Activated naive CD4-positive, alpha-beta T cell treated with anti-CD3 and anti-CD28 coated beads for 36 hours (primary cell): ENCODE measurements at regions of chr10 and their contacts with region 1.

Region 1: DNA sequence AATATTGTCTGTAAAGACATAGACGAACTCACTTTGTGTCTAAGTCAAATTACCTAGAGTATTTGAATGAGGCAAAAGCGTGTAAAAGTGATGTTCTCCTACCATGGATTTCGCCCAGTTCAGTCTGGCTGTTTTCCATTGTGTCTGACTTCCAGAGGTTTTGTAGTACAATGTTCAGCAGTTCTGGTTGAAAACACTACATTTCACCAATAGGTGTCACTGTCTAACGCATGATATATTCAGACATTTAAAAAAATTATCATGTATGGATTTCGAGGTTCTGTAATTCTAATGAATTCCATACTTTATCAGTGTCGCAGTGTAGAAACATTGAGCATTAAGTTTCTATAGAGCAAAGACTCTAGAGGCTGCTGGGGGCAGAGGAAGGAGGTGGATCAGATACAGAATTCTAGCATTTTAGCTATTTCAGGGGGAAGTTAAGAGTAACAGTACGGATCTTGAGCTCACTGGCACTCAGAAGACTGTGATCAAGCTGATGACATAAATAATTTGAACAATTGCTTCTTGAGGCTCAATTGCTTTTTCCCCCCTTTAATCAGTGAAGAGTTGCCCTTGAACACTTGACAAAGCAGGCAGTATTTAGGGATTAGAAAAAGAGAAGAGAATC is 196.9 kb upstream of the RHOBTB1 start:
- DNase-seq: no peak
- H3K4me3 Mint-ChIP-seq: no peak overlapping the region
- H3K27ac Mint-ChIP-seq: no peak overlapping the region
- H3K4me1 Mint-ChIP-seq: no peaks in the 10 kb centered on the region
- H3K27me3 Mint-ChIP-seq: peaks cover 3% of the 10 kb centered on the region

Region 2: GRCh38 chr10:60534761-60535389 is 606.0 kb before region 1 on chr10:
- CTCF ChIA-PET with region 1: no interaction called
- intact Hi-C with region 1: no loop called
- DNase-seq: no peak
- H3K4me3 Mint-ChIP-seq: no peak overlapping the region
- H3K27ac Mint-ChIP-seq: no peak overlapping the region
- H3K4me1 Mint-ChIP-seq: peaks cover 31% of the 10 kb centered on the region
- H3K27me3 Mint-ChIP-seq: no peaks in the 10 kb centered on the region

Region 3: DNA sequence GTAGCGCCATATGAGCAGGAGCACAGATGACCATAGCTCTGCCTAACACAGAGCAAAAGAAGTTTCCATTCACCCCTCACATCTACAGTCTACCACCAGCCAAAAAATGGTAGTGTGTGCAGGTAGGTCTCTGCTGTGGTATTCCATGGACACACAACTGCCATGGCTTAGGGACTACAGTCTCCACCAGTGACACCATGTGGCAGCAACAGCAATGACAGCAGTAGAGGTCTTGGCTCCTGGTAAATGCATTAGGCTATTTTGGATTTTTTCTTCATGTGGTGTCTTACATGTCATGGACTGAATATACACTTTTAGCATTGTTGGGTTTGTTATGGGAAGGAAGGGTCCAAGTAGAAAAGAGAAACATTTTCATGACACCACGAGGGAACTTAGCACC is 451.7 kb after region 1 on chr10:
- CTCF ChIA-PET with region 1: no interaction called
- intact Hi-C with region 1: loop called (anchors 5 kb)
- DNase-seq: no peak
- H3K4me3 Mint-ChIP-seq: no peak overlapping the region
- H3K27ac Mint-ChIP-seq: no peak overlapping the region
- H3K4me1 Mint-ChIP-seq: no peaks in the 10 kb centered on the region
- H3K27me3 Mint-ChIP-seq: peaks cover 6% of the 10 kb centered on the region

Region 4: DNA sequence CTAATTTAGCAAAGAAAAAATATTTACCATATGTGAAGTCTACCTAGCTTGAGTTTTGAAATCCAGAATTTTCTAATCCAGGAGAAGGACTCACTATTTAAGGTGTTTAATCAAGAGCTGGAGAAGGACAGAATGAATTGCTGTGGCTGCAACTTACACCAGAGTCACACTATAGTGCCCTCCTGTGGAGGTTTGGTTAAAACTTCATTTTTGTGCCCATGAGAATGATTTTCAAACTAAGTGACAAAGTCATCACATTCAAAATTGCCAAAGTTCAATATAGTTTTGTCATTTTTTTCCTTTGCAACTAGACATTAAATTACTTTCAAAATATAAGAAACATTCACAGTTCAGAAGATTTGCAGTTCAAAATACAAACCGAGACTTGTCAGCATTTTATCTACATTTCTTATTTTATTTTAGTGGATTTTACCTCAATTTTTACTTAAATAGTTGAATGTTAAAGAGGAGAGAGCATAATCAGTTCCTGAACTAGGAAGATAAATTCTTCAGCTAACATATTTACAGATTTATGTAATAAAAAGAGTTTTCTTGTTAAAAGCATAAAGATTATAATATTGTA is 592.6 kb after region 1 on chr10:
- CTCF ChIA-PET with region 1: interaction called, 6 read pairs
- intact Hi-C with region 1: loop called (anchors 1 kb)
- DNase-seq: peak; percentile 37
- H3K4me3 Mint-ChIP-seq: no peak overlapping the region
- H3K27ac Mint-ChIP-seq: no peak overlapping the region
- H3K4me1 Mint-ChIP-seq: no peaks in the 10 kb centered on the region
- H3K27me3 Mint-ChIP-seq: peaks cover 30% of the 10 kb centered on the region

Region 5: GRCh38 chr10:61869774-61870525 is 729.1 kb after region 1 on chr10:
- CTCF ChIA-PET with region 1: no interaction called
- intact Hi-C with region 1: loop called (anchors 1 kb)
- DNase-seq: no peak
- H3K4me3 Mint-ChIP-seq: no peak overlapping the region
- H3K27ac Mint-ChIP-seq: no peak overlapping the region
- H3K4me1 Mint-ChIP-seq: peaks cover 26% of the 10 kb centered on the region
- H3K27me3 Mint-ChIP-seq: no peaks in the 10 kb centered on the region

Region 6: GRCh38 chr10:62248465-62248864 is 1107.6 kb after region 1 on chr10:
- CTCF ChIA-PET with region 1: no interaction called
- intact Hi-C with region 1: no loop called
- DNase-seq: no peak
- H3K4me3 Mint-ChIP-seq: no peak overlapping the region
- H3K27ac Mint-ChIP-seq: no peak overlapping the region
- H3K4me1 Mint-ChIP-seq: peaks cover 52% of the 10 kb centered on the region
- H3K27me3 Mint-ChIP-seq: no peaks in the 10 kb centered on the region